Right cardiac atrium (tissue), 5 donors: ENCODE measurements at regions of chr12 and their contacts with region 1.

Region 1: DNA sequence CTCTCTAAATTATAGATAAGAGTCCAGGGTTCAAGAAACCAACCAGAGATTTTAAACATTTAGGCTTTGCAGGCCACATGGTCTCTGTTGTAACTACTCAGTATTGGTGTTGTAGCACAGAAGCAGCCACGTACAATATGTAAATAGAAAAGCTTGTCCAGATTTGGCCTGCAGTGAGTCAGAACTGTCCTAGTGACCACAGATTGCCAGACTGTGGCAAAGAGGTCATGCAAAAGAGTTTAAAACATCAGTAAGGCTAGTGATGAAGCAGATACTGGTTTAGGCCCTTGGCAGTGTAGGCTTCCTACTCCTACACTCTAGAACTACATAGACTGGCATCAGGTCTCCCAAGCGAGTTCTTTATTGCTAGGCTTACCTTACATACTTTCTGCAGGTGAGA is 117.6 kb upstream of the GARIN6 start:
- DNase-seq: no peak
- ATAC-seq: no peak
- H3K4me3 ChIP-seq: no peak overlapping the region
- H3K27ac ChIP-seq: no peak overlapping the region
- H3K4me1 ChIP-seq: no peaks in the 10 kb centered on the region
- H3K27me3 ChIP-seq: no peaks in the 10 kb centered on the region

Region 2: DNA sequence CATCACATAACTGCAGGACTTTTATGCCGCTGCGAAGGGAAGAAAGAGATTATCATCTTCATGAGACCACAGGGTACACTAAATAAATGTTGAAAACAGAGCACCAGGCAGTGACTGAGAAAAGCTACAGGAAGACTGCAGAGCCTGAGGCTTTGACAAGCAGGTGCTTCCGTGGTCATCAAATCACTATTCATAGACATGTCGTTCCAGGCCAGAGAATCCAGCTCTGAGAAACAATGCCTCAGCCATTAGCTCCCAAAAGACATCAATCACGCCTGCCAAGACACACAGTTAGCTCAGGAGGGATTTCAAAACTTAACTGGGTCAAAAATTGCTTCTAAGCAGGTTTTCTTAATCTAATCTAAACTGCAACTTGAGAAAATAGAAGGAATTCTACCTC is 70.4 kb after region 1 on chr12:
- intact Hi-C with region 1: loop called in 1 of 4 experiments (anchors 2 kb)
- DNase-seq: no peak
- ATAC-seq: no peak
- H3K4me3 ChIP-seq: no peak overlapping the region
- H3K27ac ChIP-seq: no peak overlapping the region
- H3K4me1 ChIP-seq: no peaks in the 10 kb centered on the region
- H3K27me3 ChIP-seq: no peaks in the 10 kb centered on the region